ENCODE measurements at regions of chr6 and their contacts with region 1.

Region 1: GRCh38 chr6:43013843-43014433 is at the starts of genes KLHDC3 and MEA1:
- DNase-seq: peak; percentile 100
- H3K4me3 Mint-ChIP-seq: peak within 1 kb of the TSS; percentile 99
- H3K27ac Mint-ChIP-seq: peak within 1 kb of the TSS; percentile 92
- H3K4me1 Mint-ChIP-seq: peaks cover 44% of the 10 kb centered on the region
- H3K27me3 Mint-ChIP-seq: no peaks in the 10 kb centered on the region
- total RNA-seq, gene KLHDC3: 73.8 and 77.5 TPM in 2 replicates
- total RNA-seq, gene MEA1: 93.5 and 94.3 TPM in 2 replicates

Region 2: GRCh38 chr6:42563697-42564505 is 450.0 kb before region 1 on chr6 and contains the start of gene UBR2:
- intact Hi-C with region 1: loop called (anchors 5 kb)
- DNase-seq: peak; percentile 98
- H3K4me3 Mint-ChIP-seq: peak within 1 kb of the TSS; percentile 99
- H3K27ac Mint-ChIP-seq: peak within 1 kb of the TSS; percentile 93
- H3K4me1 Mint-ChIP-seq: peaks cover 25% of the 10 kb centered on the region
- H3K27me3 Mint-ChIP-seq: peaks cover 2% of the 10 kb centered on the region
- total RNA-seq, gene UBR2: 30.1 and 30.8 TPM in 2 replicates

Region 3: GRCh38 chr6:42978839-42979522 is 35.0 kb before region 1 on chr6 and contains the start of gene PEX6:
- intact Hi-C with region 1: loop called (anchors 1 kb)
- DNase-seq: peak; percentile 99
- H3K4me3 Mint-ChIP-seq: peak within 1 kb of the TSS; percentile 91
- H3K27ac Mint-ChIP-seq: peak within 1 kb of the TSS; percentile 97
- H3K4me1 Mint-ChIP-seq: peaks cover 34% of the 10 kb centered on the region
- H3K27me3 Mint-ChIP-seq: no peaks in the 10 kb centered on the region
- total RNA-seq, gene PEX6: 24.0 and 24.1 TPM in 2 replicates

Region 4: DNA sequence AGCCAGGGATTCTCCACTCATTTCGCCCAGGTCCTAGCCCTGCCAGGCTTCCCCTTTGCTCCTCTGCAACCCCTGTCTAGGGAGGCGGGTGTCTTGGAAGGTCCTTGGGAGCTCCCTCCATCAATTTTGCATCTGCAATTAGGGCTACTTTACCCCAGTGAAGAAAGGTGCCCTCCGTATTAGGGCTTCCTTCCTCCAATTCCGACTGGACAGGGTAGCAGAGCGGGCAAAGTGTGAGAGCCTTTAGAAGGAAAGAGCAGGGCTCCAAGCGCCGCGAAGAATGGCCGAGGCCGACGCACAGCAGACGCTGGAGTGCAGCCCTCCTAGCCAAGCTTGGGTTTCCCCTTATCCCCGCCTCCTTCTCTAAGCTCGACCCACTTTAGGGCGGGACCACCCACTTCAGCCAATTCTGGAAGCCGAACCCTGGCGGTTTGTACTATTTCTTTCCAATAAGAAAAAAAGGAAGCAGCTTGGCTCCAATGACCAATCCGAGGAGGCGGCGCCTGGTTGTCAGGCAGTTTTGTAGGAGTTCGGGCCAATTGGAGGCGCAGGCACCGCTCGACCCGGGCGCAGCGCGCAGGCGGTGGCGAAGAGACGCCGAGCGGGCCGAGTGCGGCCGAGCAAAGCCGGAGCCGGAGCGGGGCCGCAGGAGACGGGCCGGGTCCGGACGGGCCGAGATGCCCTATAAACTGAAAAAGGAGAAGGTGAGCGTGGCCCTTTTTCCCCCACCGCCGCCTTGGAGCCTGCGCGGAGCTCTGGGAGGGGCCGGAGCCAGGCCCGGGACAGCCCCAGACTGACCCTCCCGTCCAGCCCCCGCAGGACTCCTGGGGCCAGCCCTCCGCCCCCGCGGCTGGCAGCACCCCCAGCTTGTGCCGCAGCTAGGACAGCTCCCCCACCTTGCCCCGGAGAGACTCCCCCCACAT is 29.7 kb before region 1 on chr6 and contains the start of gene PPP2R5D:
- intact Hi-C with region 1: loop called (anchors 1 kb)
- DNase-seq: peak; percentile 99
- H3K4me3 Mint-ChIP-seq: peak within 1 kb of the TSS; percentile 98
- H3K27ac Mint-ChIP-seq: peak within 1 kb of the TSS; percentile 91
- H3K4me1 Mint-ChIP-seq: peaks cover 54% of the 10 kb centered on the region
- H3K27me3 Mint-ChIP-seq: no peaks in the 10 kb centered on the region
- total RNA-seq, gene PPP2R5D: 54.2 and 54.6 TPM in 2 replicates

Region 5: GRCh38 chr6:43024436-43024835 is 10.5 kb after region 1 on chr6:
- intact Hi-C with region 1: no loop called
- DNase-seq: no peak
- H3K4me3 Mint-ChIP-seq: peak overlapping the region; percentile 5
- H3K27ac Mint-ChIP-seq: peak overlapping the region; percentile 72
- H3K4me1 Mint-ChIP-seq: peaks cover 22% of the 10 kb centered on the region
- H3K27me3 Mint-ChIP-seq: no peaks in the 10 kb centered on the region

Region 6: DNA sequence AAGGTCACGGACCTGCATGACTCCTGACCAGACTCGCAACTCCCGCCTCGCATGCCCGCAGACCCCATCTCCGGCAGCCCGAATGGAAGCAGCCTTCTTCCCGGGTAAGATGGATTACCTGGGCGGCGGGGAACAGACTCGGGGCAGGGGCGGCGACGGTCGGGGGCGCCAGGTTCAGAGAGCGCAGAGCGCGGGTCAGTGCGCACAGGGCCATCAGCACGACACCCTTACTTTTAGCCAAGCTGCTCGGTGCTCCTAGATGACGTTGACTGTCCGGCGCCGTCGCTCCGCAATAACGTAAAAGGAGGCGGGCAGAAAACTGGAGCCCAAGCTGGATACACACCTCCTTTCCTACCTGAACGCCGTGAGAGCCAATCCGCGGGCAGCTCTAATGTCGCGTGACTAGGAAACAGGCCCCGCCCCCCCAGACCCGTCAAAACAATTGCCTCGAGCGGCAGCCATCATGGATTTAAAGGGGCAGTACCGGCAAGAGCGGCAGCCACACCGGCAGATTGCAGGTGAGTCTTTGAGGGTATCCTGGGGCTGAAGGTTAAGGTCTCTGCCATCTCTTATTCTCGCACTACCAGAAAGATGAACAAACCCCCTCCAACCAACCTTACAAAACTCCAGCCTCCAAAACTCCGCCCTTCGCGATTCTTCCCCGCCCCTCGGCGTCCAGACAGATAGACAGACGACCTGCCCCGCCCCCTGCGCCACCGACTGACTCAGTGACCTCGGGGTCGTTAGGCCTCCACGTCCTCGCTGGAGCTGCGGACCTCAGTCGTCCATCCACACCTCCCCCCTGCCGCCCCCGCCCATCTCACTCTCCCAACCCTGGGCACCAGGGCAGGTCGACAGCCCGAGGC is 45.5 kb after region 1 on chr6 and contains the starts of genes KLC4 and MRPL2:
- intact Hi-C with region 1: loop called (anchors 1 kb)
- DNase-seq: peak; percentile 99
- H3K4me3 Mint-ChIP-seq: peak within 1 kb of the TSS; percentile 99
- H3K27ac Mint-ChIP-seq: peak within 1 kb of the TSS; percentile 98
- H3K4me1 Mint-ChIP-seq: peaks cover 35% of the 10 kb centered on the region
- H3K27me3 Mint-ChIP-seq: no peaks in the 10 kb centered on the region
- total RNA-seq, gene KLC4: 9.5 and 10.7 TPM in 2 replicates
- total RNA-seq, gene MRPL2: 83.8 and 103 TPM in 2 replicates

Region 7: DNA sequence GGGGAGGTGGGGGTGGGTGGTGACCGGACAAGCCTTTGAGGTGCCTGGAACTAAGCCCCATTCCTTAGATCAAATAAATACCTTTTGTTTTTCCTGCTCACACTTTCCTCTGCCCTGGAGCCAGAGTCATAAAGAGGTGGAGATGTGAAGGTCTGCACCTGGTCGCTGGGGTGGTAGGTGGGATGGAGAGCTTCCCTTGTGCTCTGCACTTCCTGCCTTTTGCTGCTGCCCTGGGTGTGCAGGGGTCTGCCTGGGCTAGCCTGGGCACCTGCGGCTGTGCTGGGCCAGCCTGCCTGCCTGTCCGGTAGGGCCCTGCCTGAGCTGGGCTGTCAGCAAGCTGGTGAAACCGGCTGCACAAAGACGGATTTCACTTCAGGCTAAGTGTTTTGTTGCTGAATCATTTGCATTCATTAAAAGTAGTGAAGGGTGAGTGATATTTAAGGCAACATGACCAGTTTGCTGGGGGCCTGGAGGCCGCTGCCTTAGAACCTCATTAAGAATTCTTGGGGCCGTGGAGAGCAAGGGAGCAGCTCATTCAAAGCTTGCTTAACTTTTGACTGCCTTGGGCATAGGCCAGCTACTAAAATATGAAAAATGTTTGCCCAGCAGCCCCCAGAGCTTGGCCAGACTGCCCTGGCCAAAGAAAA is 82.6 kb after region 1 on chr6:
- intact Hi-C with region 1: no loop called
- DNase-seq: no peak
- H3K4me3 Mint-ChIP-seq: no peak overlapping the region
- H3K27ac Mint-ChIP-seq: no peak overlapping the region
- H3K4me1 Mint-ChIP-seq: peaks cover 11% of the 10 kb centered on the region
- H3K27me3 Mint-ChIP-seq: no peaks in the 10 kb centered on the region

Region 8: GRCh38 chr6:43143235-43144124 is 129.5 kb after region 1 on chr6:
- intact Hi-C with region 1: loop called (anchors 1 kb)
- DNase-seq: peak; percentile 94
- H3K4me3 Mint-ChIP-seq: peak overlapping the region; percentile 24
- H3K27ac Mint-ChIP-seq: peak overlapping the region; percentile 78
- H3K4me1 Mint-ChIP-seq: peaks cover 11% of the 10 kb centered on the region
- H3K27me3 Mint-ChIP-seq: peaks cover 4% of the 10 kb centered on the region

Region 9: GRCh38 chr6:43203029-43203717 is 189.2 kb after region 1 on chr6:
- intact Hi-C with region 1: no loop called
- DNase-seq: no peak
- H3K4me3 Mint-ChIP-seq: no peak overlapping the region
- H3K27ac Mint-ChIP-seq: no peak overlapping the region
- H3K4me1 Mint-ChIP-seq: no peaks in the 10 kb centered on the region
- H3K27me3 Mint-ChIP-seq: no peaks in the 10 kb centered on the region

Region 10: DNA sequence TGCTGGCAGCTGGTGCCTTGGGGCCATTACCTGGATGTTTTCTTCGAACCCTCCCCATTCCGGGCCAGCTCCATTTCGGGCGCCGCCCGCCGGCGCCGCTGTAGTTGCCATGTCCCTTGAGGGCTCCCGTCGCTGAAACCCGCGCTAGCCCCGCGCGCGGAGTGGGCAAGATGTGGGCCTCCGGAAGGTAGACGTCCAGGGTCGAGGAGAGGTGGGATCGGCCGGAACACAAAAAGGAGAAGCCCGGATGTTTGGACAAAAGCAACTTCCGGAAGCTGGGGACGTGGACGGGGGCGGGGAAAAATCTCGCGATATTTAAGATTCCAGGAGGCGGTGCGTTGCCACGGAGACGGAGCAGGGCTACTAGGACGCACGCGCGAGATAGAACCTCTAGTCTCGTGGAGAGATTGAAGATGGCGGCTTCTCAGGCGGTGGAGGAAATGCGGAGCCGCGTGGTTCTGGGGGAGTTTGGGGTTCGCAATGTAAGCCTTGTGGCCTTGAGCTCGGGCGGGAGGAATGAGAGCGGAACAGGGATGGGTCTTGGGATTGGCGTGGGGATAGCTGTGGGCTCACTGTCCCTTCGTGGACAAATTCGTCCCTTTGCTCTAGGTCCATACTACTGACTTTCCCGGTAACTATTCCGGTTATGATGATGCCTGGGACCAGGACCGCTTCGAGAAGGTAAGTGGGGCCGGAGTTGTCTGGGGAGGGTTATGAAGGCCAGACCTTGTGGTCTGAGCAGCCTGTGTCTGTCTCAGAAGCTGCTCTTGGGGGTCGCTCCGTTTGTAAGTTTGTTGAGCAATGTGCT is 503.0 kb after region 1 on chr6 and contains the starts of genes POLR1C and YIPF3:
- intact Hi-C with region 1: loop called (anchors 2 kb)
- DNase-seq: peak; percentile 99
- H3K4me3 Mint-ChIP-seq: no peak within 1 kb of the TSS
- H3K27ac Mint-ChIP-seq: no peak within 1 kb of the TSS
- H3K4me1 Mint-ChIP-seq: peaks cover 19% of the 10 kb centered on the region
- H3K27me3 Mint-ChIP-seq: no peaks in the 10 kb centered on the region
- total RNA-seq, gene POLR1C: 91.7 TPM in 2 replicates
- total RNA-seq, gene YIPF3: 47.7 and 52.1 TPM in 2 replicates

Measured in activated CD4-positive, alpha-beta T cell treated with anti-CD3 and anti-CD28 coated beads, Interleukin-2, amount 10 ng/mL, durations not matched to agents 24 days and 14 days (primary cell).